BJ (cell line): ENCODE measurements at regions of chr12 and their contacts with region 1.

Region 1: GRCh38 chr12:111396726-111397445 is 8.8 kb upstream of the SH2B3 start:
- DNase-seq: peak; percentile 49
- H3K4me3 ChIP-seq: peak overlapping the region; percentile 2; the same call in 1 of the 2 replicates
- H3K27me3 ChIP-seq: no peaks in the 10 kb centered on the region
- CTCF ChIP-seq: peak; percentile 99

Region 2: DNA sequence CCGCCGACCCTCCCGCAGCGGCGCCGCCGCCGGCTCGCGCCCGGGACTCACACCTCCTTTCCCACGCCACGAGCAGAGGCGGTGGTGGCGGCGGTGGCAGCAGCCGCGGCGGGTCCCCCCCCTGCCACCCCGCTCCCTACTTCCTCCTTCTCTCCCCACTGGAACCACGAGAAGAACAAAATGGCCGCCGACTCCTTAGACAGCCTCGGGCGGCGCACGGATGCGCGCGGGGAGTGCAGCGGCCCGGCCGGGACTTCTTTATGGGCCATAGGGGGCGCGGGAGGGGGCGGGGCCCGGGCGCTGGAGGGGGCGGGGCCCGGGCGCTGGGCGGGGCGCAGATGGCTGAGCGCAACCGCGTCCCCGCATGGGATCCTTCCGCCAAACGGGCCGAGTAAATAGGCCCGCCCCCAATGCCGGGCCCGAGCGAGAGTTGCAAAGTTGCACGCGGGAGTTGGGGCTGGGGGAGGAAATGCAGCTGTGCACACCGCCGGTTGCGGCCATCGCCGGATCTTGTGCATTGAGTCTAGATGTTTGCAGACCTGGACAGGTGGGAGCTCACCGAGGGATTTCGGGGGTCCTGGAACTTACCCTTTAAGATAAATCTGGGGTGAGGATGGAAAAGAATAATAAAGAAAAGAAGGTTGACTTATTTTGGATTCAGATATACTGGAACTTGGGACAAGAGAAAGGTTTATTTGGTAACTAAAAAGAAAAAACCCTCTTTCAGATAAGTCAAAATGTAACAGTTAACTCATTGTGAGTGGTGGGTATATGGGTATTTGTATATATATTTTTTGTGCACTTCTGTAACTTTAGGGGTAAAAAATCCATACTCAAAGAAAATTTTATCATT is 653.9 kb before region 1 on chr12 and contains the start of gene PPP1CC:
- CTCF ChIA-PET with region 1: no interaction called
- POLR2A ChIA-PET with region 1: interaction called, 15 read pairs
- DNase-seq: no peak
- H3K4me3 ChIP-seq: peak within 1 kb of the TSS; percentile 80
- H3K27me3 ChIP-seq: no peaks in the 10 kb centered on the region
- CTCF ChIP-seq: no peak
- polyA plus RNA-seq, gene PPP1CC: 58.1 and 91.5 TPM in 2 replicates

Region 3: GRCh38 chr12:111386885-111387284 is 10.0 kb before region 1 on chr12:
- CTCF ChIA-PET with region 1: interaction called, 41 read pairs
- POLR2A ChIA-PET with region 1: no interaction called
- DNase-seq: no peak
- H3K4me3 ChIP-seq: no peak overlapping the region
- H3K27me3 ChIP-seq: 0 out of 2 replicates have a peak, but pooled peaks cover under 1% of the 10 kb centered on the region
- CTCF ChIP-seq: no peak

Region 4: GRCh38 chr12:111451649-111452129 is 54.8 kb after region 1 on chr12:
- CTCF ChIA-PET with region 1: interaction called, 260 read pairs
- POLR2A ChIA-PET with region 1: no interaction called
- DNase-seq: no peak
- H3K4me3 ChIP-seq: no peak overlapping the region
- H3K27me3 ChIP-seq: no peaks in the 10 kb centered on the region
- CTCF ChIP-seq: peak; percentile 80

Region 5: GRCh38 chr12:111482462-111482861 is 85.6 kb after region 1 on chr12:
- CTCF ChIA-PET with region 1: interaction called, 22 read pairs
- POLR2A ChIA-PET with region 1: interaction called, 5 read pairs
- DNase-seq: no peak
- H3K4me3 ChIP-seq: no peak overlapping the region
- H3K27me3 ChIP-seq: no peaks in the 10 kb centered on the region
- CTCF ChIP-seq: peak; percentile 26; the same call in 1 of the 2 replicates

Region 6: DNA sequence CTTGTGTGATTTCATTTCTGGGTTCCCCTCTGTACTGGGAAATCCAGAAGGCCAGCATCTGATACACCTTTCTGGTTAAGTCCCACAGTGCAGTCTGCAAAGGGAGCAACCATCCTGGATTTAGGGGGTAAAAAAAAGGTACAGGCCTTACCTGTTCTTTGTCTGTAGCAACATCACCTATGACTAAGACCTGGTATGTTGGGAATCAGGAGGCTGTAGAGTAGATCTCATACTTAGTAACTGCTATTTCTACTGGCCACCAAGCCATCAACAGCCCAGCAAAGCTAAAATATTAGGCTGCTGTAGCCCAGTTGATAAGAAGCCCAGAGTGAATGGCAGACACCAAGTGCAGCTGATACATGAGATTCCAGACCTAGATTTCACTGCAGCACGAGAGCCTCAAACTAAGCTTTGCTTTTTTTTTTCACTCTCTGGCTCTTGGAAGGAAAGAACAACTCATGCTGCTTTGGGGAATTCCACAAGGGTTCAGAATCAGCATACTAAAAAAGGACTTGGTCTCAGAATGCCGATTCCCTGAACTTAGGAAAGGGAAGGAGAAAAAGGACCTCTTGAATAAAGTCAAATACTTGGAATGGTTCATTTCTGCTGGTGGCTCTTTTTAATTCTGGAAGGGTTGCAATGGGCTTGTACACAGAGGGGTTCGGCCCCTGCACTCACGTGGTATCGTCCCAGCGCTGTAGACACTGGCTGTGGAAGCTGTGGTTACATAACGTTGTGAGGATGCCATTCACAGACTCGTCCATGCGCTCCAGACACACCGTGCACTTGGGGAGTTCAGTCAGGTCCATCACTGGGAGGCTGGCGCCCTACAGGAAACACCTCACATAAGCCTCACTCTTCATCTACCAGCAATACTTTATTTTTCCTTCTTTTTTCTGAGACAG is 268.3 kb after region 1 on chr12:
- CTCF ChIA-PET with region 1: interaction called, 12 read pairs
- POLR2A ChIA-PET with region 1: no interaction called
- DNase-seq: no peak
- H3K4me3 ChIP-seq: no peak overlapping the region
- H3K27me3 ChIP-seq: no peaks in the 10 kb centered on the region
- CTCF ChIP-seq: no peak